ENCODE measurements at regions of chr2 and their contacts with region 1.

Region 1: GRCh38 chr2:191642541-191642940 is 35.4 kb upstream of the NABP1 start:
- DNase-seq: no peak
- H3K4me3 ChIP-seq: no peak overlapping the region
- H3K27ac ChIP-seq: peak overlapping the region in 1 of 4 donors; percentile 5
- H3K4me1 ChIP-seq: peaks cover 8 to 54% (median 18%) of the 10 kb centered on the region in 4 donors
- H3K27me3 ChIP-seq: no peaks in the 10 kb centered on the region
- CTCF ChIP-seq: no peak
- EP300 ChIP-seq: no peak
- POLR2A ChIP-seq: no peak

Region 2: DNA sequence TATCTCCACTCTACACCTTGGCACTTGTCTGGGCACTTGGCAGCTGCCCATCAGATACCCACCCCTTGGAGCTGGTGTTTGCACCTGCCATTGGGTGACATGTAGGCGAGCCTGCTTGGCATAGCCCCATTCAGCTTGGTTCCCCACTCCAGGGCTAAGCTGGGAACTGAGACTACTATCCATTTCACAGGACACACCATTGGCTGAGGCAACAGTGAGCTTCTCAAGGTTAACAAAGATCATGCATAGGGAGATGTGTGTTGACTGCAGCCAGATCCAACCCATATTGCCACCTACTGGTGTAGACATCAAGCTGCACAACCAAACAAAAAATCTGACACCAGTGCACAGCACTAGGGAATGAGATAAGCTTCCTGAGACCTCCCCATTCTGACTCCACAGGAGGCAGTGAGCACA is 1942.0 kb after region 1 on chr2:
- in situ Hi-C with region 1: no loop called
- intact Hi-C with region 1: loop called (anchors 5 kb)
- DNase-seq: no peak
- H3K4me3 ChIP-seq: no peak overlapping the region
- H3K27ac ChIP-seq: no peak overlapping the region
- H3K4me1 ChIP-seq: no peaks in the 10 kb centered on the region
- H3K27me3 ChIP-seq: no peaks in the 10 kb centered on the region
- CTCF ChIP-seq: peak in 2 of 5 experiments; percentile 25 to 36
- EP300 ChIP-seq: no peak
- POLR2A ChIP-seq: no peak